ENCODE measurements at regions of chr1 and their contacts with region 1.

Region 1: DNA sequence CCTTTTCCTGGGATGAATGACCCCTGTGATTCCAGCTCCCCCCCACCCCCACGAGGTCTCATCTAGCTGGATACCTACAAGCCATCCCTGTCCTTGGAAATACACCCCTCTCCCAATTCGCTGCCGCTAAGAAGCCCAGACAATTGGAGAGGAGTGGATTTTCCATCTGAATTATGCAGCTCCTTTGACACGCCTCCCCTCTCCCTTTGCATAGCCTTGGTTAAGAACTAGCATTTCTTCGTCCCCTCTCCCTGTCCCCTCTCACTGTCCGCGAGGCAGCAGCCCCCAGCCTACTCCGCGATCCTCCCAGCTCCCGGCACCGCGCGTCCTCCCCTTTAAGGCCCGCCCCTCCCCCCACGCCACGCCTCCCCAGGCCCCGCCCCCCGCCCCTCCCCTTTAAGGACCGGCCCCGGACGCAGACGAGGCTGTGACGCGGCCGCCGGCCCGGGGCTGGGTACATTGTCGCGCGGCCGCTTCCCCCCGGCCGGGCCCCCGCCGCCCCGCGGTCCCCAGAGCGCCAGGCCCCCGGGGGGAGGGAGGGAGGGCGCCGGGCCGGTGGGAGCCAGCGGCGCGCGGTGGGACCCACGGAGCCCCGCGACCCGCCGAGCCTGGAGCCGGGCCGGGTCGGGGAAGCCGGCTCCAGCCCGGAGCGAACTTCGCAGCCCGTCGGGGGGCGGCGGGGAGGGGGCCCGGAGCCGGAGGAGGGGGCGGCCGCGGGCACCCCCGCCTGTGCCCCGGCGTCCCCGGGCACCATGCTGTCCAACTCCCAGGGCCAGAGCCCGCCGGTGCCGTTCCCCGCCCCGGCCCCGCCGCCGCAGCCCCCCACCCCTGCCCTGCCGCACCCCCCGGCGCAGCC is at the start of gene MAPKAPK2:
- DNase-seq: peak; percentile 80
- H3K4me3 ChIP-seq: peak within 1 kb of the TSS; percentile 66 to 87
- H3K27ac ChIP-seq: peak within 1 kb of the TSS; percentile 92
- H3K4me1 ChIP-seq: no peaks in the 10 kb centered on the region
- H3K27me3 ChIP-seq: no peaks in the 10 kb centered on the region
- CTCF ChIP-seq: no peak
- POLR2A ChIP-seq: peak; percentile 54
- total RNA-seq, gene MAPKAPK2: 27.1 to 67.0 TPM

Region 2: GRCh38 chr1:206723812-206724472 is 39.2 kb after region 1 on chr1:
- intact Hi-C with region 1: loop called (anchors 5 kb)
- DNase-seq: no peak
- H3K4me3 ChIP-seq: no peak overlapping the region
- H3K27ac ChIP-seq: no peak overlapping the region
- H3K4me1 ChIP-seq: no peaks in the 10 kb centered on the region
- H3K27me3 ChIP-seq: no peaks in the 10 kb centered on the region
- CTCF ChIP-seq: no peak
- POLR2A ChIP-seq: no peak